Panc1 (cell line): ENCODE measurements at regions of chr15 and their contacts with region 1.

Region 1: GRCh38 chr15:89946781-89947221 is 34.0 kb upstream of the ARPIN start:
- DNase-seq: no peak
- ATAC-seq: no peak
- H3K4me3 ChIP-seq: no peak overlapping the region
- H3K27ac ChIP-seq: no peak overlapping the region
- H3K4me1 ChIP-seq: no peaks in the 10 kb centered on the region
- H3K27me3 ChIP-seq: no peaks in the 10 kb centered on the region
- CTCF ChIP-seq: no peak

Region 2: DNA sequence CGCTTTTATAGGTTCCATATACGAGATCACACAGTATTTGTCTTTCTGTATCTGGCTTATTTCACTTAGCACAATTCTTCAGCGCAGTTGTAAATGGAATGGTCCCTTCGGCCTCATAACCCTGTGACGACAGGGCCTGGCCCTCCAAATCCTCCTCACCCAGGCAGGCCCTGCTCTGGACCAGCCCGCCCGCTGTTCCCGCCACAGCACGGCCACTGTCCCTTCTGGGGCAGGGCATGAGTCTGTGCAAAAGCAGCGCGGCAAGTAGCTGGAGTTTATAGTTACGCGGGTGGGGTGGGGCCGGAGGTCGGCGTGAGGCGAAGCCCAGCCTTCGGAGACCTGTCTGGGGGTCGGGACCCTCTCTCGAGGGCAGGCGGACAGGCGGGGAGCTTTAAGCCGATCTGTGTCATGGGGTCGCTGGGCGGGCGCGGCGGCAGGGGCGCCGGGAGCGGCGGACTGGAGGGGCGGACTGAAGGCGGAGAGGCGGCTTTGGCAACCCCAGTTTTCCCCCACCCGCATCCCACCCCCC is 34.6 kb before region 1 on chr15:
- CTCF ChIA-PET with region 1: no interaction called
- POLR2A ChIA-PET with region 1: no interaction called
- in situ Hi-C with region 1: no loop called
- intact Hi-C with region 1: no loop called
- DNase-seq: no peak
- ATAC-seq: peak; percentile 83
- H3K4me3 ChIP-seq: peak overlapping the region; percentile 58
- H3K27ac ChIP-seq: peak overlapping the region; percentile 64
- H3K4me1 ChIP-seq: peaks cover 12% of the 10 kb centered on the region; the same call in 1 of the 2 replicates
- H3K27me3 ChIP-seq: no peaks in the 10 kb centered on the region
- CTCF ChIP-seq: no peak

Region 3: DNA sequence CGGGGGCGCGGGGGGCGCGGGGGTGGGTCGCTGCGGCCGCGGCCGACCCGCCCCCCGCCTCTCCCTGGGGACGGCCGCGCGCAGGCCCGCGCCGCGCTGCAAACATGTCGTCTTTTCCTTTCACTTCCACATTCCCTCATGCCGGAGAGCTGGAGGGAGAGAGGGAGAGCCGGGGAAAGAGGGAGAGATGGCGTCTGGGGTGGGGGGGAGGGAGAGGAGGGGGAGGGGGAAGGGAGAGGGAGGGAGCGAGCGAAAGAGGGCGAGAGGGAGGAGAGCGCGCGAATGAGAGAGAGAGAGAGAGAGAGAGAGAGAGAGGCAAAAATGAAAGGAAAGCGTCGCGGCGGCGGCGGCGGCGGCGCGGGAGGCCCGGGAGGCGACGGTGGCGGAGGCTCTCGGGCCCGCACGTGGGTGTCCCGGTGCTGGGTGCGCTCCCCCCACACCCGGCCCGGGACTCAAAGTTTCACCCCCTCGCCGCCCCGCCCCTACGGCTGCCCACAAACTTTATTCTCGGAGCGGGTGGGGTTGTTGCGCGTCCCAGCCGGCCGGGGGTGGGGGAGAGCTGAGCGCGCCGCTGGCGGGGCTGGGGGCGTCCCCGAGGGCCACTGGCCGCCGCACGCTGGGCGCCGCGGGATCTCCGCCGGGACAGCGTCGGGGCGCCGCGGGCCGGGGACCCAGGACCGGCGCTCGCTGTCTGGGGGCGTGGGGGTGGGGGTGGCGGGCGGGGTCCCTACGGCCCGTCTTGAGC is 55.1 kb after region 1 on chr15:
- CTCF ChIA-PET with region 1: no interaction called
- POLR2A ChIA-PET with region 1: interaction called, 10 read pairs
- in situ Hi-C with region 1: no loop called
- intact Hi-C with region 1: no loop called
- DNase-seq: no peak
- ATAC-seq: peak; percentile 56
- H3K4me3 ChIP-seq: peak overlapping the region; percentile 64 to 81
- H3K27ac ChIP-seq: no peak overlapping the region
- H3K4me1 ChIP-seq: peaks cover 61% of the 10 kb centered on the region
- H3K27me3 ChIP-seq: no peaks in the 10 kb centered on the region
- CTCF ChIP-seq: no peak